GM10248 (cell line): ENCODE measurements at regions of chr12 and their contacts with region 1.

Region 1: DNA sequence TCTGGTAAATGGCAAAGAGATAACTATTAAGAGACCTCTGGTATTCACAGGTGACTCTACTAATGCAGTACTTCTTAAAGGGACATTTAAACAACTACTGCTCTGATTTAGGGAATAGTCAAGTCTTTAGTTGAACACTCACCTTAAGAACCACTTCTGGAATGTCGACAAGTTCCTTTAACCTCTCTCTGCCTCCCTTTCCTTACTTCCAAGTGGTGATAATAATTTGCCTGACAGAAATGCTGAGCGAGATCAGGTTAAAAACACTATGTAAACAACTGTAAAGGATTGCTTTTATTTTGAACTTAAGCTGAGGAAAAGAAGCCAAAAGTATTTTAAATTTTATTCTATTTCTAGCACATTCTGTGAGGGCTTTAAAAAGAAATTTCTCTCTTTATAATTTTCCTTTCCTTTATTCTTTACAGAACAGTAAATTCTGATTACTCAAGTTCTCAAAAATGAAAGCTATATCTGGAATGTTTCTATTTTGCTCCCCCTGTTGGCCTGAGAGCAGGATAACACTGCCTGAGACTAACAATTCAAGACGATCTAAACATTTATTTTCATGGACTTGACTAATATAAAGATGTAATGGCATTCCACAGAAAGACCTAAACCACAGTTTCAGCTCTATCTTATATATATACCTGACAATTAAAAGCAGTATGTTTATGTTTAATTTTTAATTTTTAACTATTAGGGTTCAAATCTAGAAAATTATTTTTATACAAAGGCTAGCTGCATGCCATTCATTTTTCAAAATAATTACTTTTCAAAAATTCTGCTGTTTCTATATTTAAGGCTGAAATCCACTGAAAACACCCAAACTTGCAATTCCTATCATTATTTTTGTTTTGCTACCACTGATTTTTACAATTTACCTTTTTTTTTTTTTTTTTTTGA is 29.2 kb downstream of the ZCCHC8 start:
- DNase-seq: peak; percentile 54
- CTCF ChIP-seq: peak; percentile 80

Region 2: DNA sequence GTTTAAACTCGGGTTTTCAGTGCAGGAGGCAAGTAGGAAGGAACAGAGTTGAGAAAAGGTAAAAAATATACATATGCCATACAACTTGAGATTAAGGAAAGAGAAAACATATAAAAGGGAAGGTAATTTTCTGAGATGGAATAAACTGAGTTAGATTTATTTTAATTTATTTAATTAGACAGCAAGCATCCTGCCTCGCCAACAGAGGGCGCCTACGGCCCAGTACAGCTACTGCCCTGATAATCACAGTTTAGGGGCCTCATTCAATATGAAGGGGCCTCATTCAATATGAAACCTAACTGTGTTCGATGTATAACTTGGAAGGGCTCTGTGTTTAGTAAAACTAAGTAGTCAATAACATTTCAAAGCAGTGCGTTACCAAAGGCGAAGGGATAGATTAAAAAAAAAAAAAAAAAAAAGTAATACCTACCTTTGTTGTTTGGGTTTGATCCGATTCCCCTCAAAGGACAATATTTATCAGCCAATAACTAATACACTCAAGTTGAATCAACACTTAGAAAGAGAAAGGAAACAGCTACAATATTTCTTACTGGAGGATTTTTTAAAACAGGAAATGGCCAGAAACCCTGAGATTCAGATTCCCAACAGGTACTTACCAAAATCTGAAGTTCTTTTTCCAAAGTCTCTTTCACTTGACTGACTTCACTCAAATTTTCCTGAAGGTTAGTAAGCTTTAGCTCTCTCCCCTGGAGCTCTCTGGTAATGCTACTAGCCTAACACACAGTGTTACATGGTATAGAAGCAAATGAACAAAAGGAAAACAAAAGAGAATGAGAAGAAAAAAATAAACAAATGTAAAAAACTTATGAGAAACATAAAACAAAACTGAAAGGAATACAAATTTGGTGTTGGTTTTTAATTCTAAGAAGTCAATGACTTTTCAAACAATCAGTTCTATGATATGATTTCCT is 135.3 kb before region 1 on chr12:
- CTCF ChIA-PET with region 1: interaction called, 13 read pairs
- POLR2A ChIA-PET with region 1: no interaction called
- DNase-seq: peak; percentile 43
- CTCF ChIP-seq: peak; percentile 65

Region 3: DNA sequence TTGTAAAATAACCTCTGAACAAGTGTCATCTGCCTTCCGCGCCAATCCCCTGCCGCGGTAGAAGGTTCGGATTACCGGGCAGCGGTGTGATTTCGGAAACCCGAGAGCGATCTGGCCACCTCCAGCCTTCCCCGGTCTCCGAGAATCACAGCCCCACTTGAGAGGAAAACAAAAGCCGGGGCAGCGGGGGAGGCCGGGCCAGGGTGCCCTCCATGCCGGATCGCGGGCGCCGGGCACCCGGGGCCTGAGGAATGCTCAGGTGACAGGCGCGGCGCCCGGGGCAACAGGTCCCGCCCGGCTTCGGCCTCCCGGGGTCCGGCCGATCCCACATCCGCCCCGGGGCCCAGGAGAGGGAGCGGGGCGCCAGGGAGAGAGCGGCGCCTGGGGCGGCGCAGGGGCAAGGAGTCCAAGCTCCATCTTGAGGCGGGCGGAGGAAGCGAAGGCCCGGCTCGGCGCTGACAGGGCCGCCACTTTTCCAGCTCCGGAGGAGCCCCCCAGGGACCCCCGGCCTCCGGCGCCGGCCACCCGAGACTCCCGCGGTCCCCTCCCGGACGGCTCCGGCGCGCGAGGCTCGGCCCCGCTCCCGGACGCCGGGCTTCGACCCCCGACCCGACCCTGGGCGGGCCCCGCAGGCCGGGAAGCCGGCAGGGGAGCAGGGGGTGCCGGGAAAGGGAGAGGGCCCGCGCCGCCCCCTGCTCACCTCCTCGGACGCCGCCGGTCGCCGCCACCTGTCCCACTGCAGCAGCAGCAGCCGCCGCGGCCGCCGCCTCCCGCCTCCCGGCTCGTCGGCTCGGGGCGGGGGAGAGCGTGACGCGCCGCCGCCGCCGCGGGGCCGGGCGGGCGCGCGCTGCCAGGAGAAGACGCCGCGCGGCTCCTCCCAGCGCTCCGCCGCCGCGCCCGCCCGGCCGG is 49.5 kb before region 1 on chr12 and contains the start of gene CLIP1:
- CTCF ChIA-PET with region 1: interaction called, 11 read pairs
- POLR2A ChIA-PET with region 1: interaction called, 4 read pairs
- DNase-seq: peak; percentile 74
- CTCF ChIP-seq: peak; percentile 72

Region 4: GRCh38 chr12:122459211-122459610 is 12.4 kb before region 1 on chr12:
- CTCF ChIA-PET with region 1: interaction called, 52 read pairs
- POLR2A ChIA-PET with region 1: no interaction called
- DNase-seq: no peak
- CTCF ChIP-seq: no peak

Region 5: DNA sequence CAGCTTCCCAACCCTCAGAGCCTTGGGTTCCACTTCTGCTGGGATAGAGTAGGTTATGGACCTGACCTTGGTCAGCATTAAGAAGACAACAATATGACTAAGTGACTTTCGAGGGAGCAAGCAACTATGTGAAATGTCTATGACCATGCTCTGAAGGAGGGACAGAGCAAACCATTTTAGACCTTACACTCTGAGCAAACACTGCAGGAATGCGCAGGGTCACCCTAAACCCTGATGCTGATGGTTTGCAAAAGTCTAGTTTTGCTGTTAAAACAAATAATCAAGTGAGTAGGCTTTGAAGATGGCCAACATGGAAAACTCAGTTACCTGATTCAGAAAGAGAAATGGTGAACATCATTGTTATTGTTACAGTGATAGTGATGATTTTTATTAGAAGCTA is 20.4 kb after region 1 on chr12:
- CTCF ChIA-PET with region 1: interaction called, 48 read pairs
- POLR2A ChIA-PET with region 1: no interaction called
- DNase-seq: no peak
- CTCF ChIP-seq: no peak